Posterior cingulate gyrus (tissue), 11 donors: ENCODE measurements at regions of chr11 and their contacts with region 1.

Region 1: GRCh38 chr11:70191495-70192140 is 11.5 kb upstream of the FADD start:
- DNase-seq: peak in 9 of 10 donors; percentile 36 to 92 (median 65)

Region 2: DNA sequence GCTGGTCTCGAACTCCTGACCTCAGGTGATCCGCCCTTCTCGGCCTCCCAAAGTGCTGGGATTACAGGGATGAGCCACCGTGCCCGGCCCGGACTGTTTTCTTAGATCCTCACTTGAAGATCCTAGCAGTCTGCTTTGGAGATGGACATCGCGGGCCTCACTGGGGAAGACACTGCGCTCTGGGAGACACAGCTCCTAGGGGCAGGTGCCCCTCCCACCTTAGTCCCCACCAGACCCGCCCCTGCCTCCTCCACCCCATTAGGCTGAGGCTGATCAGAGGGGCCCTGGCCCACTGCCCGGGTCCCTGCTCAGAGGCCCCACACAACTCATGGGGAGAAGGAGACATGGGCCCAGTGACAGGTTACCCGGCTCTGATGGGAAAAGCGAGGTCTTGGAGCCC is 505.2 kb before region 1 on chr11:
- intact Hi-C with region 1: loop called (anchors 2 kb)
- DNase-seq: peak in 2 of 10 donors; percentile 76 to 78

Region 3: DNA sequence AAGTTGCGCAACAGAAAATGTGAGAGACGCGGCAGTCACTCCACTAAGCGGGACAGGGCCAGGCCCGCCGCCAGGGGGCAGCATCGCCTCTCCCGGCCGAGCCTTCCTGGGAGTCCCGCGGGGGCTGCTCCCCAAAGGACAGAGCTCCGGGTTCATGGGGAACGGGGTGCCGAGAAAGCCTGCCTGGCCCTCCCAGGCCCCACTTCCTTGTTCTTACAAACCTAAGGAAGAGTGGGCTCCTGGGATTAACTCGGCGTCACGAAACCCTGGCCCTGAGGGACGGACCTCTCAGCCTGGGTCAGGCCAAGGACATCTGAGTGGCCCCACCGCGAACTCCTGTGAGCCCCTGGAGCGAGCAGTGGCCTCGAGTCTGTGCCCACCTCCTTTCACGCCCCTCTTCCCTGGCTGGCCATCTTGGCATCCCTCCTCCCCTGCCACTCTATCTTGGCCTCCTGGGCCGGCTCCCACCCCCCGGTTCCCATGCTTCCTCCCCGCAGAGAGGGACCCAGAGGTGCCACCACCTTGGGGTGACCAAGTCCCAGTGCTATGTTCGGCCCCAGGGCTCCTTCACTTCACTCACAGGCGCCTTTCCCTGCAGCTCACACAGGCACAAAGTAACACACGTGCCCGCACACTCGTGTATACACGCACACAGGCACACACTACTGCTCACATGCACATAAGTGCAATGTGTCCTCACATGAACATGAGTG is 272.5 kb before region 1 on chr11:
- intact Hi-C with region 1: loop called (anchors 1 kb)
- DNase-seq: peak; percentile 43 to 94 (median 75)

Region 4: GRCh38 chr11:70128435-70128906 is 63.1 kb before region 1 on chr11:
- intact Hi-C with region 1: no loop called
- DNase-seq: no peak